Activated naive CD4-positive, alpha-beta T cell treated with anti-CD3 and anti-CD28 coated beads for 36 hours (primary cell): ENCODE measurements at regions of chr17 and their contacts with region 1.

Region 1: DNA sequence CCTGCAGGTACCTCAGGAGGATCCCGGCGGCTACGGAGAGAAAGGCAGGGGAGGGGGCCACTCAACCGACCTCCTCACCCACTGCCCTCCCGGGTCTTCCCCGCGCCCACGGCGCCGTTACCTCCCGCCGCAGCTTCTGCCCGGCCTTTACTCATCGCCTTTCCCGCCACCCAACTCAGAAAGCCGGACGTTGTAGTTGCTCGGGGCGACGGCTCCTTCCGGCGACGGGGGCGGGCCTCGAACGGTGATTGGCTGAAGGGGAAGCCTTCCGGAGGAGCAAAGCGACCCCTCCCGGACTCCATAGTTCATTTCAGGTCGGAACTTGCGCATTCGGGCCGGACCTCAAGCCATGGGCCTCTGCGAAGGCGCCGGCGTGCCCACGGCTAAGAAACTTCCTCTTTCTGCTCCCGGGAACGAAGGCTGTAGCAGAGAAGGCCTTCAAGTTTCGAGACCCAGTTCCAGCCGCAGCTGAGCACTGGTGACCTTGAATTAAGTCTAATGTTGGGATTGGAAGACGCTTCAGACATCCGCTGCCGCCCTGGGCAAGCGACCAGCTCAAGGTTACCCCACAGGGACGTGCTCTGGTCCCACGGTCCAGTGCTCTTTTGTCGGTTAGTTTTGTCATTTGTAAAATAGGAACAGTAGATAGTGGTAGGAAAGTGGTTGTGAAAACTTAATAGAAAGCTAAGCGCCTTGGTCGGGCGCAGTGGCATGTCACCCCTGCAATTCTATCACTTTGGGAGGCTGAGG is at the start of gene PSMC3IP:
- DNase-seq: peak; percentile 98
- H3K4me3 Mint-ChIP-seq: peak within 1 kb of the TSS; percentile 98
- H3K27ac Mint-ChIP-seq: peak within 1 kb of the TSS; percentile 96
- H3K4me1 Mint-ChIP-seq: peaks cover 44% of the 10 kb centered on the region
- H3K27me3 Mint-ChIP-seq: no peaks in the 10 kb centered on the region
- total RNA-seq, gene PSMC3IP: 38.6 to 42.2 TPM

Region 2: GRCh38 chr17:42438600-42439567 is 138.8 kb before region 1 on chr17:
- CTCF ChIA-PET with region 1: no interaction called
- intact Hi-C with region 1: no loop called
- DNase-seq: peak; percentile 74
- H3K4me3 Mint-ChIP-seq: no peak overlapping the region
- H3K27ac Mint-ChIP-seq: no peak overlapping the region
- H3K4me1 Mint-ChIP-seq: peaks cover 6% of the 10 kb centered on the region
- H3K27me3 Mint-ChIP-seq: no peaks in the 10 kb centered on the region

Region 3: DNA sequence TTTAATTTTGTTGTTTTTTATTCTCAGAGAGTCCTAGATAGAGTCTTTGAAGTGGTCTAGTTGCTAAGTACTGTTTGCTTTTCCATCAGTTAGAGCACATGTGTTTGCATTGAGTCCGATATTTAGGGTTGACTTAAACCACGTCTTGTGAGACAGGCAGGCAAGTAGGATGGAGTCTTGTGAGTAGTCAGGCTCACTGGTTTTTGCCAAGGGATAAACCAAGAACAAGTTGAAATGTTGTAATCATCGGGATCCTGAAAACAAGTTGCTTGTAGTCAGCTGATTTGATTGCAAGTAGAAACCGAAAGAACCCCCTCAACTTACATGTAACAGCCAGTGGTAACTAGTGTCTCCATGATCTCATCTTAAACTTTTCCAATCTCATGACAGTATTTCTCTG is 101.9 kb before region 1 on chr17:
- CTCF ChIA-PET with region 1: no interaction called
- intact Hi-C with region 1: no loop called
- DNase-seq: no peak
- H3K4me3 Mint-ChIP-seq: no peak overlapping the region
- H3K27ac Mint-ChIP-seq: no peak overlapping the region
- H3K4me1 Mint-ChIP-seq: peaks cover 6% of the 10 kb centered on the region
- H3K27me3 Mint-ChIP-seq: no peaks in the 10 kb centered on the region

Region 4: DNA sequence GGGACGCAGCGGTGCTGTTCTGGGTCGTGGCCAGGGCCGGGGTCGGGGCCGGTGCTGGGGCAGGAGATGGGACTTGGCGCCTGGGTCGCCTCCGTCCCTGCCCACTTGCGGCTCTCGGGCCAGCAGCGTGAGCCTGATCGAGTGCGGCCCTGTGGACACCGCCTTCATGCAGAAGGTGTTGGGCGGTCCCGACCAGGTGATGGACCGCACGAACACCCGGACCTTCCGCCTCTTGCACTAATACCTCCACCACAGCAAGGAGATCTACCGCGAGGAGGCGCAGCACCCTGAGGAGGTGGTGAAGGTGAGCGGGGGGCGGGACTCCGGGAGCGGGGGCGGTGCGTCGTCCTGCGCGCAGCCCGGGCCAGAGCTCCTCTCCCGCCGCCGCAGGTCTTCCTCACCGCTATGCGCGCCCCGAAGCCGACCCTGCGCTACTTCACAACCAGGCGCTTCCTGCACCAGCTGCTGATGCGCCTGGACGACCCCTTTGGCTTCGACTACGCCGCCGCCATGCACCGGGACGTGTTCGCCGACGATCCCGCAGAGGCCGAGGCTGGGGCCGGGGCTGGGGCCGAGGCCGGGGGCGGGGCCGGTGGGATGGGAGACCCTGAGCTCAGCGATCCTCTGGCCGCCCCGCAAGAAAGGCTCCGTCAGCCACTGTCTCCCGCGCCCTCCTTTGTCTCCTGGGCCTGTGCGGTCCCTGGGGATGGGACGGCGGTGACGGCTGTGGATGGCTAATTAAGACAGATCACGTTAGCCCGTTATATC is 29.5 kb before region 1 on chr17:
- CTCF ChIA-PET with region 1: interaction called, 10 read pairs
- intact Hi-C with region 1: no loop called
- DNase-seq: peak; percentile 89
- H3K4me3 Mint-ChIP-seq: peak overlapping the region; percentile 21
- H3K27ac Mint-ChIP-seq: no peak overlapping the region
- H3K4me1 Mint-ChIP-seq: peaks cover 13% of the 10 kb centered on the region
- H3K27me3 Mint-ChIP-seq: no peaks in the 10 kb centered on the region

Region 5: DNA sequence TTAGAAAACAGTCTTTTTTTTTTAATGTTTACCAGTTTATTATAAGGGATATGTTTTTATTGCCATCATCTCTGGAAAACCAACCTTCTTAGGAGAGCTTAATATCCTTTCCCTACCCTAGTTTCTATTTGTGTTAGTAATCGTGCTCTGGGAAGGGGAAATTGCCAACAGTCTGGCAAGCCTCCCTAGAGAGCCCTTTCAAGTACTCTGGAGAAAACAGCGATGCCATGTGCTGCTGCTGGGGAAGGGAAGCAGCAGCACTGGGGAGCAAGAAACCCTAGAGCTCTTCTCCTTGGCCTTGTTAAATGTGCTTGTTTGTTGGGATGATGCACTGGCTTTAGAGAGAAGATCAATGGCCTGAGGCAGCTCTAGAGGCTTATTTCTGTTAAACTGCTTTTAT is 21.2 kb after region 1 on chr17:
- CTCF ChIA-PET with region 1: interaction called, 36 read pairs
- intact Hi-C with region 1: no loop called
- DNase-seq: no peak
- H3K4me3 Mint-ChIP-seq: no peak overlapping the region
- H3K27ac Mint-ChIP-seq: peak overlapping the region; percentile 22
- H3K4me1 Mint-ChIP-seq: peaks cover 26% of the 10 kb centered on the region
- H3K27me3 Mint-ChIP-seq: no peaks in the 10 kb centered on the region

Region 6: GRCh38 chr17:42659079-42659931 is 81.6 kb after region 1 on chr17 and contains the start of gene TUBG2:
- CTCF ChIA-PET with region 1: interaction called, 3 read pairs
- intact Hi-C with region 1: loop called (anchors 5 kb)
- DNase-seq: peak; percentile 77
- H3K4me3 Mint-ChIP-seq: peak within 1 kb of the TSS; percentile 87
- H3K27ac Mint-ChIP-seq: peak within 1 kb of the TSS; percentile 60
- H3K4me1 Mint-ChIP-seq: peaks cover 21% of the 10 kb centered on the region
- H3K27me3 Mint-ChIP-seq: no peaks in the 10 kb centered on the region
- total RNA-seq, gene TUBG2: 9.1 to 9.9 TPM

Region 7: DNA sequence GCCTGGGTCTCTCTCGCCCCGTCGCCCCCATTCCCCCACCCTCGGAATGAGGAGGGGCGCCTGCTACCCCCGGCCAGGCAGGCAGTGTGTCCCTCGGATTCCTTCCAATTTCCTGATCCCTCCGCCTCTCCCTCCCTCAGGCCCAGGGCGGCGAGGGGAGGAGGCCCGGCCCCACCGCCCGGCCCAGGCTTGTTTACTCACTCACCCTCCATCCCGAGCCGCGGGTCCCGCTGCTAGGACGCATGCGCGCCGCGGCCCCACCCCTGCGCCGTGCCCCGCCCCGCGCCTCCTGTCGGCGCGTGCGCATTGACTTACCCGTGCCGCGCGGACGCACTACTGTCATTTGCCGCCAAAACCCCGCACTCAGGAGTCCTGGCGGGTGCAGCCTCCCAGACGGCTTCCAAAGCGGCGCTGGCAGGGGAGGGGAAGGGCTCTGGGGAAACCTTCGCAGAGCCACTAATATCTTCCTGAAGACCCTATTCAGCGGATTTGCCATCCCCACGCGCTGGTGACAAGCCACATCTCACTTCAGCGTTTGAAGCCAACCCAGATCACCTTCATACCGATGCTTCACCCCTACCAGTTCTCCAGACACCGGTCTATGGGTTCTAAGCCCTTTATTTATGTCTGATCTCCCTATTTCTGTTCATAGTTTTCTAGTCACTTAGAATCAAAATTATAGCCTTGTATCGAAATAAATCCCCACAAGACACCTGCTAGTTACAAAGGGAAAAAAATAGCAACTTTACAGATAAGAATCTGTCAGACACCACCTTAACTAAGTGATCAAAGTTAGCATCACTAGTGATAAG is 167.3 kb after region 1 on chr17 and contains the start of gene EZH1:
- CTCF ChIA-PET with region 1: interaction called, 4 read pairs
- intact Hi-C with region 1: loop called (anchors 1 kb)
- DNase-seq: peak; percentile 93
- H3K4me3 Mint-ChIP-seq: peak within 1 kb of the TSS; percentile 90
- H3K27ac Mint-ChIP-seq: peak within 1 kb of the TSS; percentile 93
- H3K4me1 Mint-ChIP-seq: peaks cover 21% of the 10 kb centered on the region
- H3K27me3 Mint-ChIP-seq: peaks cover 6% of the 10 kb centered on the region
- total RNA-seq, gene EZH1: 31.9 to 34.0 TPM

Region 8: DNA sequence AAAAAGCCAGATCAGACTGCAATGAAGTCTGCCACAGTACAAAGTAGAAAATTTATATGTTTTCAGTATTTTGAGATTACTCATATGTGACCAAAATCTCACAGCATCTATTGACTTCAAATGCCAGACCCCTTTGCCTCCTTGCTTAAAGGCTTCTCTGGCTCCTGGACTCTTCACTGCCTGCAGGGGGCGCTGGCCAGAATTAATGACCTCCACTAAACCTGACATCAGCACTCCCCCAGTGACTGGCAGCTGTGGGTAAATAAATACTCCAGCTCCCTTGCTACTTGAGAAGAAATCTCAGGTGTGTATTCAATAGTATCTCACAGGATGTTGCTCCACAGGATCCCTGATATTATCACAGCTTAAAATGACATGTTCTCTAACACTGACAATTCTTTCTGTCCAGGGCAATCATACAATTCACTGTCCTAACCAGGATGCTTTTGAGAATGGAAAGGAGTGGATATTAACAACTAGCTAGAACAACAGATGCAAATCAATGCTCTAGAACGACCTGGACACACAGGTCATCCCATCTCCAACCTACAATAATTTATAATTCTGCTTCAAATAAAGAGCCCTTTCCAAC is 242.3 kb after region 1 on chr17:
- CTCF ChIA-PET with region 1: interaction called, 7 read pairs
- intact Hi-C with region 1: loop called (anchors 1 kb)
- DNase-seq: peak; percentile 82
- H3K4me3 Mint-ChIP-seq: no peak overlapping the region
- H3K27ac Mint-ChIP-seq: no peak overlapping the region
- H3K4me1 Mint-ChIP-seq: peaks cover 32% of the 10 kb centered on the region
- H3K27me3 Mint-ChIP-seq: no peaks in the 10 kb centered on the region

Region 9: GRCh38 chr17:42908872-42909700 is 331.4 kb after region 1 on chr17:
- CTCF ChIA-PET with region 1: no interaction called
- intact Hi-C with region 1: no loop called
- DNase-seq: no peak
- H3K4me3 Mint-ChIP-seq: no peak overlapping the region
- H3K27ac Mint-ChIP-seq: no peak overlapping the region
- H3K4me1 Mint-ChIP-seq: no peaks in the 10 kb centered on the region
- H3K27me3 Mint-ChIP-seq: no peaks in the 10 kb centered on the region